CD4-positive, alpha-beta memory T cell (primary cell): ENCODE measurements at regions of chr3 and their contacts with region 1.

Region 1: GRCh38 chr3:141303481-141304223 is 64.7 kb upstream of the ZBTB38 start:
- DNase-seq: peak; percentile 69 to 79 (median 76)
- H3K4me3 ChIP-seq: no peak overlapping the region
- H3K4me3 Mint-ChIP-seq: no peak overlapping the region
- H3K27ac ChIP-seq: no peak overlapping the region
- H3K27ac Mint-ChIP-seq: peak overlapping the region in 2 of 7 donors; percentile 7 to 25
- H3K4me1 ChIP-seq: peaks cover 39% of the 10 kb centered on the region
- H3K4me1 Mint-ChIP-seq: peaks cover 27 to 50% (median 45%) of the 10 kb centered on the region in 4 donors
- H3K27me3 ChIP-seq: no peaks in the 10 kb centered on the region
- H3K27me3 Mint-ChIP-seq: no peaks in the 10 kb centered on the region

Region 2: GRCh38 chr3:140715027-140715426 is 588.6 kb before region 1 on chr3:
- CTCF ChIA-PET with region 1: no interaction called
- POLR2A ChIA-PET with region 1: no interaction called
- intact Hi-C with region 1: no loop called
- DNase-seq: no peak
- H3K4me3 ChIP-seq: no peak overlapping the region
- H3K4me3 Mint-ChIP-seq: no peak overlapping the region
- H3K27ac ChIP-seq: no peak overlapping the region
- H3K27ac Mint-ChIP-seq: no peak overlapping the region
- H3K4me1 ChIP-seq: no peaks in the 10 kb centered on the region
- H3K4me1 Mint-ChIP-seq: no peaks in the 10 kb centered on the region
- H3K27me3 ChIP-seq: no peaks in the 10 kb centered on the region
- H3K27me3 Mint-ChIP-seq: no peaks in the 10 kb centered on the region

Region 3: DNA sequence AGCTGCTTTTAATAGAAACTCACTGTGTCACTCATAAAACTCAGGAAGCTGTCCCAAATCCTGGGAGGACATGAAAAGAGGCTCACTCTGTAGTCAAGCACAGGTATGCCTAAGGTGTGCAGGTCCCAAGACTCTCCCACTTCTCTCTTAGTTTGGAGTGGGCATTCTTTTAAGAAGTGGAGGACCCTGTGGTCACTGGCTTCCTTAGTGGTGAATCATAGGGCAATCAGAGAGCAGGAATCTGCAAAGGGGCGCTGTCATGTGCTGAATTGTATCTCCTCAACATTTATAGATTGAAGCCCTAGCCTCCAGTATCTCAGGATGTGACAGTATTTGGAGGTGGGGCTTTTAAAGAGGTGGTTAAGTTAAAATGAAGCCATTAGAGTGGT is 17.5 kb after region 1 on chr3:
- CTCF ChIA-PET with region 1: interaction called, 16 read pairs
- POLR2A ChIA-PET with region 1: interaction called, 6 read pairs
- intact Hi-C with region 1: no loop called
- DNase-seq: no peak
- H3K4me3 ChIP-seq: no peak overlapping the region
- H3K4me3 Mint-ChIP-seq: peak overlapping the region in 6 of 8 donors; percentile 0 to 77 (median 62)
- H3K27ac ChIP-seq: no peak overlapping the region
- H3K27ac Mint-ChIP-seq: peak overlapping the region; percentile 48 to 93 (median 86)
- H3K4me1 ChIP-seq: peaks cover 19% of the 10 kb centered on the region
- H3K4me1 Mint-ChIP-seq: peaks cover 15 to 28% (median 23%) of the 10 kb centered on the region in 4 donors
- H3K27me3 ChIP-seq: no peaks in the 10 kb centered on the region
- H3K27me3 Mint-ChIP-seq: no peaks in the 10 kb centered on the region

Region 4: GRCh38 chr3:141370065-141370533 is 66.4 kb after region 1 on chr3:
- CTCF ChIA-PET with region 1: interaction called, 22 read pairs
- POLR2A ChIA-PET with region 1: interaction called, 9 read pairs
- intact Hi-C with region 1: no loop called
- DNase-seq: peak; percentile 82 to 88 (median 84)
- H3K4me3 ChIP-seq: no peak overlapping the region
- H3K4me3 Mint-ChIP-seq: no peak overlapping the region
- H3K27ac ChIP-seq: no peak overlapping the region
- H3K27ac Mint-ChIP-seq: peak overlapping the region in 6 of 7 donors; percentile 30 to 90 (median 58)
- H3K4me1 ChIP-seq: no peaks in the 10 kb centered on the region
- H3K4me1 Mint-ChIP-seq: peaks cover 5 to 11% (median 8%) of the 10 kb centered on the region in 4 donors
- H3K27me3 ChIP-seq: no peaks in the 10 kb centered on the region
- H3K27me3 Mint-ChIP-seq: no peaks in the 10 kb centered on the region

Region 5: DNA sequence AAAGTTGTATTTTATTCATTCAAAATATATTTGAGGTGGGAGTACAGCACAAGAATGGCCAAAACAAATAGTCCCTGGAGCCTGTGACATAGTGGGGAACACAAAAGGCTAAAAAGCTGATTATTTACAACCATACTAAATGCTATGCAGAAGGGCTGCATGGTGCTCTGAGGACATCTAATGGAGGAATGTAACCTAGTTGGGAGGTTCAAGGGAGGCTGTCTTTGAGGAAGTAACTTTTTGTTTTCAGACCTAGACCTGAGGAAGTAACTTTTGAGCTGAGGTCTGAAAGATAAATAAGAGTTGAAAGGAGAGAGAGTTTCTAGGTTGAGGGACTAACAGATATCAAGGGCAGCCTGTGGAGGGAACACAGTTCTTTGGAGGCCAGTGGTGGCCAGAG is 148.4 kb after region 1 on chr3:
- CTCF ChIA-PET with region 1: interaction called, 428 read pairs
- POLR2A ChIA-PET with region 1: interaction called, 26 read pairs
- intact Hi-C with region 1: loop called (anchors 1 kb)
- DNase-seq: peak; percentile 57 to 64 (median 62)
- H3K4me3 ChIP-seq: no peak overlapping the region
- H3K4me3 Mint-ChIP-seq: no peak overlapping the region
- H3K27ac ChIP-seq: no peak overlapping the region
- H3K27ac Mint-ChIP-seq: no peak overlapping the region
- H3K4me1 ChIP-seq: peaks cover 18% of the 10 kb centered on the region
- H3K4me1 Mint-ChIP-seq: peaks cover 7 to 14% (median 10%) of the 10 kb centered on the region in 4 donors
- H3K27me3 ChIP-seq: no peaks in the 10 kb centered on the region
- H3K27me3 Mint-ChIP-seq: no peaks in the 10 kb centered on the region

Region 6: DNA sequence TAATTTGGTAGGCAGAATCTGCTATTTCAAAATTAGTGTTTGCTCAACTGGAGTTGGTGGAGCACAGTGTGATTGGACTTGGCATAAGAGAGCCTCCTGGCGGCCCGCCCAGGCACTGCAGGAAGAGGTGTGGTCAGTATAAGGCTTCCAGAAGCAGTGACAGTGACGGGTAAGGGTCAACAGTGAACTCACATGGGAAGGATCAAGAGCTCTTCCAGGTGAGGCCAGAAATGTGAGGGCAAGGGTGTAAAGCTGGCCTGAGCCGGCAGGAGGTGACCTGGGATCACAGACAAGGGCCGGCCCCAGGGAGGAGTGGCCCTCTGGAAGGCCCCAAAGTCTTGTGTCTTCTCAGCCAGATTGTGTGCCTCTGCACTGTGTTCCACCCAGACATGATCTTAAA is 341.3 kb after region 1 on chr3:
- CTCF ChIA-PET with region 1: interaction called, 6 read pairs
- POLR2A ChIA-PET with region 1: no interaction called
- intact Hi-C with region 1: loop called (anchors 5 kb)
- DNase-seq: peak; percentile 49 to 58 (median 56)
- H3K4me3 ChIP-seq: no peak overlapping the region
- H3K4me3 Mint-ChIP-seq: peak overlapping the region in 1 of 8 donors; percentile 1
- H3K27ac ChIP-seq: no peak overlapping the region
- H3K27ac Mint-ChIP-seq: peak overlapping the region in 2 of 7 donors; percentile 23 to 61
- H3K4me1 ChIP-seq: no peaks in the 10 kb centered on the region
- H3K4me1 Mint-ChIP-seq: peaks cover 0 to 3% (median 1%) of the 10 kb centered on the region in 4 donors
- H3K27me3 ChIP-seq: no peaks in the 10 kb centered on the region
- H3K27me3 Mint-ChIP-seq: no peaks in the 10 kb centered on the region